ENCODE measurements at regions of chr1 and their contacts with region 1.

Region 1: DNA sequence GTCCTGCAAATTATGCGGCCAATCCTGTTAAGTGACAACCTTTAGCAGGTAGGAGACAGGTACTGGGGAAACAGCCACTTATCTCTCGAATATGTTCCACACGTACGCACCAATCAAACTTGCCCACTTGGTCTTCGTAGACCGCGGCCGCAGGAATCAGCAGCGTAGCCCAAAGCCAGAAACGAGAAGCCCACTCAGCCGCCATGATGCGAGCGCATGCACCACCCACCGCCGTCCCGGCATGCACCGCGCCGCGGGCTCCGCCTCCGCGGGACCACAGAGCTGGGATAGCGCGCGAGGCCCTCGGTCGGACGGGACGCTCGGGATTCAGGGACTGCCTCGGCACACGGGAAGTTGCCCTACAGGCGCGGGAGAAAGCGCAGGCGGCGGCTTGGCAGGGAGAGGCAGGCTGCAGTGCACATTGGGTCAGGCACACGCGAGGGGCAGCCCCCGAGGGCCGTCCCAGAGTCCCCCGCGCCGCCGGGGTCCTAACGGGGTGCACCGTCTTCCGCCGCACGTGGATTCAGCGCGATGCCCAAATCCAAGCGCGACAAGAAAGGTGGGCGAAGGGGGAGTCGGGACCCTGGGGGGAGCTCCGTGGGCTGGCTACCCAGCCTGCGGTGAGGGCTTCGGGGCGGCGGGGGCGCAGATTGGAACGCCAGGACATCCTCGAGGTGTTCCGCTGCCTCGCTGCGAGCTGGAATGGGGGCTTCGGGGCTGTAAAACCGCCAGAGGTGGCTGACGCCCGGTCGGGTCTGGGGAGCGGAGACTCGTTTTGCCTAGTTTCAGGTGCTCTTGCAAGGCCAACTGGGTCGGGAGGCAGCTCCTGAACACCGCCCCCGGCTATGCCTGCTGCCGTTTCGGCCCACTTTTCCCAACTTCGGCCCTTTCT is at the starts of genes EMC1 and MRTO4:
- DNase-seq: peak; percentile 88 to 95 (median 89)
- H3K4me3 ChIP-seq: peak within 1 kb of the TSS; percentile 87 to 96
- H3K4me3 Mint-ChIP-seq: peak within 1 kb of the TSS; percentile 90 to 97 (median 94)
- H3K27ac ChIP-seq: peak within 1 kb of the TSS; percentile 89
- H3K27ac Mint-ChIP-seq: peak within 1 kb of the TSS; percentile 92 to 96 (median 95)
- H3K4me1 ChIP-seq: peaks cover 42% of the 10 kb centered on the region
- H3K4me1 Mint-ChIP-seq: peaks cover 15 to 42% (median 24%) of the 10 kb centered on the region in 4 donors
- H3K27me3 ChIP-seq: no peaks in the 10 kb centered on the region
- H3K27me3 Mint-ChIP-seq: no peaks in the 10 kb centered on the region
- total RNA-seq, gene EMC1: 34.7 to 35.3 TPM
- total RNA-seq, gene MRTO4: 17.0 to 18.6 TPM

Region 2: GRCh38 chr1:18516473-18516872 is 735.1 kb before region 1 on chr1:
- CTCF ChIA-PET with region 1: no interaction called
- POLR2A ChIA-PET with region 1: no interaction called
- intact Hi-C with region 1: no loop called
- DNase-seq: no peak
- H3K4me3 ChIP-seq: no peak overlapping the region
- H3K4me3 Mint-ChIP-seq: no peak overlapping the region
- H3K27ac ChIP-seq: no peak overlapping the region
- H3K27ac Mint-ChIP-seq: no peak overlapping the region
- H3K4me1 ChIP-seq: no peaks in the 10 kb centered on the region
- H3K4me1 Mint-ChIP-seq: no peaks in the 10 kb centered on the region
- H3K27me3 ChIP-seq: no peaks in the 10 kb centered on the region
- H3K27me3 Mint-ChIP-seq: peaks cover 5 to 13% of the 10 kb centered on the region in 2 donors

Region 3: DNA sequence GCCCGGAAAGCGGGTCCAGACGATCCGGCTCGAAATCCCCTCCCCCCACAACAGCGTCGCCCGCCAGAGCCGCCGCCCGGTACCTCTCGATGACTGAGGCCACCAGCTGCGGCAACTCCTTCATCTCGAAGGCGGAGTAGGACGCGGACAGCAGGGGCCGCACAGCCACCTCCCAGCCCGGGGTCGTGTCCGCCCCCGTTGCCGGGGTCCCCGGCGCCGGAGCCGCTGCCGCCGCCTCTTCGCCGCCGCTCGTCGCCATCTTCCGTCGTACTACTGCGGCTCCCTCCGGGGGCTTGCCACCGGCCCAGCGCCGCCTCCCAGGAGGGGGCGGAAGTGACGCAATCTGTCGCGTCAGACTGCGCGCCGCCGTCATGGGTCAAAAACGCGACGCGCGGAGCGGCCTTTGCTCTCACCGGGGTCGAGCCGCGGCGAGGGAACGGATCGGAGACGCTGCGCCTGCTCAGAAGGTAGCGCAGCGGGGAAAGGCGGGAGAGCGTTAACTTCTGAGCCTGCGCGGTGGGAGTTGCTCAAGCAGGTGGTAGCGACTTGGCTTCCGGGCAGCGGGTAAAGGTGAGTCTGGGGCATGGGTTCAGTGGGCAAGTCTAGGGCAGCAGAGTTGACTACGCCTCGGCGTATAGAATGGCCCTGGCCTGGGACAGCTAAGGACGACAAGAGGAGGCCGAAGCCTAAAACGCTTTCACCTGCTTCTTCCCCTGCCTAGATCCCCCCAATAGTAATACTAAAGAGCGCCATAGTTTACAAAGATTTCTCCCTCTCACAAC is 41.4 kb before region 1 on chr1 and contains the start of gene UBR4:
- CTCF ChIA-PET with region 1: no interaction called
- POLR2A ChIA-PET with region 1: interaction called, 15 read pairs
- intact Hi-C with region 1: loop called (anchors 1 kb)
- DNase-seq: peak; percentile 95 to 96 (median 96)
- H3K4me3 ChIP-seq: peak within 1 kb of the TSS; percentile 81 to 82
- H3K4me3 Mint-ChIP-seq: peak within 1 kb of the TSS; percentile 93 to 99 (median 96)
- H3K27ac ChIP-seq: peak within 1 kb of the TSS; percentile 95
- H3K27ac Mint-ChIP-seq: peak within 1 kb of the TSS; percentile 98 to 99 (median 99)
- H3K4me1 ChIP-seq: peaks cover 73% of the 10 kb centered on the region
- H3K4me1 Mint-ChIP-seq: peaks cover 46 to 84% (median 66%) of the 10 kb centered on the region in 4 donors
- H3K27me3 ChIP-seq: no peaks in the 10 kb centered on the region
- H3K27me3 Mint-ChIP-seq: no peaks in the 10 kb centered on the region
- total RNA-seq, gene UBR4: 152 to 154 TPM

Region 4: DNA sequence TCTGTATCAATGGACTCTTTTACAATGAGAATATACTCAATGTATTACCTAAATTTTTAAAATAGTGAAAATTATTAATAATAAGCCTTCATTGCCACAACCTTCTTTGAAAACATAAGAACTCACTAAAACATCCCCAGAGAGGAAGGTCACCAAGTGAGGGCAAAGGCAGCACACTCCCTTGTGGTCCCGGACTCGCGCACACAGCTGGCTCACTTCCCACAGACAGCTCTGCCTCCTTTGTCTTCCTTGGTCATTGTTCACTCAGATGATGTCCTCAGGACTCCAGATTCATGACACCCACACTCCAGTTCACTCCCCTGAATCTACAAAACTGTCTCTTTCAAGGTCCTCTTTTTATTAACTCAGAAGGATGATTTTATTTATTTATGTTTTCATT is 22.3 kb before region 1 on chr1:
- CTCF ChIA-PET with region 1: no interaction called
- POLR2A ChIA-PET with region 1: no interaction called
- intact Hi-C with region 1: no loop called
- DNase-seq: no peak
- H3K4me3 ChIP-seq: no peak overlapping the region
- H3K4me3 Mint-ChIP-seq: no peak overlapping the region
- H3K27ac ChIP-seq: no peak overlapping the region
- H3K27ac Mint-ChIP-seq: peak overlapping the region in 2 of 7 donors; percentile 17 to 27
- H3K4me1 ChIP-seq: no peaks in the 10 kb centered on the region
- H3K4me1 Mint-ChIP-seq: peaks cover 0 to 3% (median under 1%) of the 10 kb centered on the region in 4 donors
- H3K27me3 ChIP-seq: no peaks in the 10 kb centered on the region
- H3K27me3 Mint-ChIP-seq: no peaks in the 10 kb centered on the region

Region 5: GRCh38 chr1:19240673-19241538 is 10.6 kb before region 1 on chr1:
- CTCF ChIA-PET with region 1: interaction called, 5 read pairs
- POLR2A ChIA-PET with region 1: interaction called, 11 read pairs
- intact Hi-C with region 1: no loop called
- DNase-seq: peak; percentile 62 to 67 (median 65)
- H3K4me3 ChIP-seq: no peak overlapping the region
- H3K4me3 Mint-ChIP-seq: no peak overlapping the region
- H3K27ac ChIP-seq: no peak overlapping the region
- H3K27ac Mint-ChIP-seq: peak overlapping the region in 6 of 7 donors; percentile 36 to 91 (median 67)
- H3K4me1 ChIP-seq: no peaks in the 10 kb centered on the region
- H3K4me1 Mint-ChIP-seq: peaks cover 0 to 2% (median under 1%) of the 10 kb centered on the region in 4 donors
- H3K27me3 ChIP-seq: no peaks in the 10 kb centered on the region
- H3K27me3 Mint-ChIP-seq: no peaks in the 10 kb centered on the region

Region 6: GRCh38 chr1:19311959-19312781 is 60.6 kb after region 1 on chr1 and contains the starts of genes AKR7A2 and SLC66A1:
- CTCF ChIA-PET with region 1: no interaction called
- POLR2A ChIA-PET with region 1: interaction called, 4 read pairs
- intact Hi-C with region 1: loop called (anchors 1 kb)
- DNase-seq: peak; percentile 80 to 94 (median 89)
- H3K4me3 ChIP-seq: peak within 1 kb of the TSS; percentile 49 to 91
- H3K4me3 Mint-ChIP-seq: peak within 1 kb of the TSS; percentile 81 to 95 (median 90)
- H3K27ac ChIP-seq: peak within 1 kb of the TSS; percentile 70
- H3K27ac Mint-ChIP-seq: peak within 1 kb of the TSS; percentile 77 to 91 (median 87)
- H3K4me1 ChIP-seq: peaks cover 34% of the 10 kb centered on the region
- H3K4me1 Mint-ChIP-seq: peaks cover 28 to 55% (median 35%) of the 10 kb centered on the region in 4 donors
- H3K27me3 ChIP-seq: no peaks in the 10 kb centered on the region
- H3K27me3 Mint-ChIP-seq: no peaks in the 10 kb centered on the region
- total RNA-seq, gene AKR7A2: 25.1 to 26.3 TPM
- total RNA-seq, gene SLC66A1: 7.4 to 10.2 TPM

Region 7: GRCh38 chr1:19344372-19345230 is 93.0 kb after region 1 on chr1:
- CTCF ChIA-PET with region 1: no interaction called
- POLR2A ChIA-PET with region 1: no interaction called
- intact Hi-C with region 1: no loop called
- DNase-seq: peak in 4 of 5 donors; percentile 33 to 44 (median 35)
- H3K4me3 ChIP-seq: no peak overlapping the region
- H3K4me3 Mint-ChIP-seq: no peak overlapping the region
- H3K27ac ChIP-seq: no peak overlapping the region
- H3K27ac Mint-ChIP-seq: peak overlapping the region in 4 of 7 donors; percentile 40 to 57 (median 42)
- H3K4me1 ChIP-seq: no peaks in the 10 kb centered on the region
- H3K4me1 Mint-ChIP-seq: peaks cover 6 to 11% (median 8%) of the 10 kb centered on the region in 4 donors
- H3K27me3 ChIP-seq: no peaks in the 10 kb centered on the region
- H3K27me3 Mint-ChIP-seq: no peaks in the 10 kb centered on the region

Measured in CD4-positive, alpha-beta memory T cell (primary cell).